ENCODE measurements at regions of chr14 and their contacts with region 1.

Region 1: DNA sequence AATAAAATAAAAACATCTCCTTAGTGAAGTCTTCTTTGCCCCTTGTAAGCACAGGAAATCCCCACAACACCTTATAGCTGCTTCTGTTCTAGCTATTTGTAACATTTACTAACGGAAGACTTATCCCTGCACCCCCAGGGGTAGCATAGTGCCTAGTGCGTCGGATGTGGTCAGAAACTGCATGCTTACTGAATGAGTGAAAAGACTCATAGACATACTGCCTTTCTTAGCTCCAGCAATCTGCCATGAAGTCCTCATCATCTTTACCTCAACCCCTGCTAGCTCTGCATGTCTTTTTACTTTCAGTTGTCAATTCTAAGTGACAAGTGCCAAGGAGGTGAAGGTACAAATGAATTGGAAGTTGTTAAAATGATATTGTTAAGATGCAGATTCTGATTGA is 12.9 kb downstream of the RIOX1 start:
- DNase-seq: no peak
- ATAC-seq: no peak

Region 2: GRCh38 chr14:73568381-73568781 is 64.7 kb after region 1 on chr14:
- intact Hi-C with region 1: loop called (anchors 5 kb)
- DNase-seq: no peak
- ATAC-seq: no peak

Region 3: DNA sequence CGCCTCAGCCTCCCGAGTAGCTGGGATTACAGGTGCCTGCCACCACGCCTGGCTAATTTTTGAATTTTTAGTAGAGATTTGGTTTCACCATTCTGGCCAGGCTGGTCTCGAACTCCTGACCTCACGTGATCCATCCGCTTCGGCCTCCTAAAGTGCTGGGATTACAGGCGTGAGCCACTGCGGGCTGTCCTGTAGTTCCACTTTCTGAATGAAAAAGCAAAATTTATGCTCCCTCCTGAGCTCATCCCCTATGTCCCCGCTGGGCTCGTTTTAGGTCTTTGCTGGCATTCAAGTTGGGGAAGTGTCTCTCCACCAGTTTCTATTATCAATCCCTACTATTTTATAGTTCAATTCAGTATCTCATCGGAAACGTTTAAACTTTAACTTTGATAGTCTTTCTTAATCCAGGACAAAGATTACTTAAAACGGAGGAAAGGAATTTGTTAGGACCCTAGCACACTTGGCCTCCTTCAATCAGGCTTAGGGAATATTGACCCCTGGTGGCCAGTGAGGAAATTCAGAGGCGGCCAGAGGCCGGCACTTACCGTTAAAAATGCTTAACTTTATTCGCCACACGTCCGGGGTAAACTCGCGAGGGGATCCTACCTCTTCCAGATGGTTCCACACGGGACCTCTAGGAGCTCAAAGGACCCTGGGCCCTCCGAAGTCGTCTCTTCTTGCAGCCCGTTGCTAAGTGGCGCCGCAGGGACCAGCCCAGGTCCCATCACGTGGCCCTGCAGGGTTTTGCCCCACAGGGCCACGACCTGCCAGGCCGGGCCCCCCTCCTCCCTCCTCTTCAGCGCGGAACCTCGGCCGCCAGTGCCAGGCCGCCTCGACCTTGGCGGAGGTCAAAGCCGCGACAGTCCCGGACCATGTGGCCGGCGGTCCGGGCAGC is 129.7 kb after region 1 on chr14:
- intact Hi-C with region 1: loop called (anchors 2 kb)
- DNase-seq: peak; percentile 75
- ATAC-seq: peak; percentile 87

Region 4: DNA sequence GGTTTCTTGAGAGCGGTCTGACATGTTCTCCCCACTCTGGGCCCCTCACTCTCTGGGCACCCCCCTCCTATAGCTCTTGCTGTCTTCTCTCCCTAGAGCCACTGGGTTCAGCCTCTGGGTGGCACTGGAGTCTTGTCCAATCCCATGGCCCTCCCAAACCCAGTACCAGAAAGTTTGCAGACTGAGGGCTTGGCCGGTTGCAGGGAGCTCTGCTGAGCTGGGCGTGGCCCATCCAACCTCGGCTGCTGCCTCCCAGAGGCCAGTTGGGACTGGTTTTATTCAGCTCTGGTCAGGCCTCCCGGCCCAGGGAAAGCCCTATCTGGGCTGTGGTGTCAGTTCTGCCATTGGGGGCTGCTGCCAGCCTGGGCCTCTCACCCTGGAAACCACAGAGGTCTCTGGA is 1027.8 kb after region 1 on chr14:
- intact Hi-C with region 1: no loop called
- DNase-seq: no peak
- ATAC-seq: peak; percentile 66